CD8-positive, alpha-beta memory T cell (primary cell): ENCODE measurements at regions of chr17 and their contacts with region 1.

Region 1: GRCh38 chr17:63722403-63722802 is 19.2 kb downstream of the STRADA start:
- DNase-seq: no peak
- H3K4me3 ChIP-seq: no peak overlapping the region
- H3K4me3 Mint-ChIP-seq: no peak overlapping the region
- H3K27ac ChIP-seq: no peak overlapping the region
- H3K27ac Mint-ChIP-seq: peak overlapping the region in 1 of 8 donors; percentile 54
- H3K4me1 ChIP-seq: no peaks in the 10 kb centered on the region
- H3K4me1 Mint-ChIP-seq: peaks cover 0 to 3% (median 0%) of the 10 kb centered on the region in 3 donors
- H3K27me3 ChIP-seq: no peaks in the 10 kb centered on the region
- H3K27me3 Mint-ChIP-seq: no peaks in the 10 kb centered on the region

Region 2: GRCh38 chr17:63611354-63611753 is 111.0 kb before region 1 on chr17:
- CTCF ChIA-PET with region 1: no interaction called
- POLR2A ChIA-PET with region 1: no interaction called
- DNase-seq: no peak
- H3K4me3 ChIP-seq: no peak overlapping the region
- H3K4me3 Mint-ChIP-seq: peak overlapping the region in 5 of 7 donors; percentile 15 to 71 (median 54)
- H3K27ac ChIP-seq: no peak overlapping the region
- H3K27ac Mint-ChIP-seq: peak overlapping the region; percentile 45 to 93 (median 84)
- H3K4me1 ChIP-seq: peaks cover 30% of the 10 kb centered on the region
- H3K4me1 Mint-ChIP-seq: peaks cover 29 to 35% (median 34%) of the 10 kb centered on the region in 3 donors
- H3K27me3 ChIP-seq: no peaks in the 10 kb centered on the region
- H3K27me3 Mint-ChIP-seq: no peaks in the 10 kb centered on the region

Region 3: GRCh38 chr17:63688396-63689020 is 33.9 kb before region 1 on chr17:
- CTCF ChIA-PET with region 1: no interaction called
- POLR2A ChIA-PET with region 1: no interaction called
- DNase-seq: no peak
- H3K4me3 ChIP-seq: no peak overlapping the region
- H3K4me3 Mint-ChIP-seq: no peak overlapping the region
- H3K27ac ChIP-seq: no peak overlapping the region
- H3K27ac Mint-ChIP-seq: peak overlapping the region in 2 of 8 donors; percentile 47 to 59
- H3K4me1 ChIP-seq: no peaks in the 10 kb centered on the region
- H3K4me1 Mint-ChIP-seq: peaks cover 10 to 18% (median 12%) of the 10 kb centered on the region in 3 donors
- H3K27me3 ChIP-seq: no peaks in the 10 kb centered on the region
- H3K27me3 Mint-ChIP-seq: no peaks in the 10 kb centered on the region

Region 4: GRCh38 chr17:63707151-63707550 is 15.3 kb before region 1 on chr17:
- CTCF ChIA-PET with region 1: interaction called, 11 read pairs
- POLR2A ChIA-PET with region 1: interaction called, 5 read pairs
- DNase-seq: peak in 4 of 5 donors; percentile 21 to 67 (median 61)
- H3K4me3 ChIP-seq: peak overlapping the region; percentile 55
- H3K4me3 Mint-ChIP-seq: peak overlapping the region; percentile 79 to 88 (median 84)
- H3K27ac ChIP-seq: peak overlapping the region; percentile 62
- H3K27ac Mint-ChIP-seq: peak overlapping the region; percentile 80 to 99 (median 95)
- H3K4me1 ChIP-seq: peaks cover 86% of the 10 kb centered on the region
- H3K4me1 Mint-ChIP-seq: peaks cover 70 to 85% (median 74%) of the 10 kb centered on the region in 3 donors
- H3K27me3 ChIP-seq: no peaks in the 10 kb centered on the region
- H3K27me3 Mint-ChIP-seq: no peaks in the 10 kb centered on the region

Region 5: DNA sequence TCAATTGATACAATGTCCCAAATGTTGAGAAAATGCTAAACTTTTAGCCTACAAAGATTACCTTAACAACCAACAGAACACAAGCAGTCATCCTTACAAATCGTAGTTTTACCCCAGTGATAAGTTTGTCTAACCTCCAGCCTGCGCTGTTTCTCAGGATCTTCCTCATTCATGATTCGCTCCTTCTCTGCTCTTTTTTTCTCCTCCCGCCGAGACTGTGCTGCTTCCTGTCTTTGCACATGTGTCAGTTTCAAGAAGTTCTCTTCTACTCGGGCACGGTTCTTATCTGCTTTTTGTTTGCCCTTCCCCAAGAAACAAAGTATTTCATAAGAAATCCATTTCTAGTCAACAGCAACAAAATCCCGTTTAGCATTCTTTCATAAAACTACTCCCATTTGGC is 29.4 kb after region 1 on chr17:
- CTCF ChIA-PET with region 1: no interaction called
- POLR2A ChIA-PET with region 1: no interaction called
- DNase-seq: peak in 1 of 5 donors; percentile 46
- H3K4me3 ChIP-seq: no peak overlapping the region
- H3K4me3 Mint-ChIP-seq: peak overlapping the region in 6 of 7 donors; percentile 3 to 67 (median 36)
- H3K27ac ChIP-seq: no peak overlapping the region
- H3K27ac Mint-ChIP-seq: peak overlapping the region in 7 of 8 donors; percentile 1 to 82 (median 73)
- H3K4me1 ChIP-seq: peaks cover 9% of the 10 kb centered on the region
- H3K4me1 Mint-ChIP-seq: peaks cover 8 to 15% (median 10%) of the 10 kb centered on the region in 3 donors
- H3K27me3 ChIP-seq: no peaks in the 10 kb centered on the region
- H3K27me3 Mint-ChIP-seq: no peaks in the 10 kb centered on the region

Region 6: DNA sequence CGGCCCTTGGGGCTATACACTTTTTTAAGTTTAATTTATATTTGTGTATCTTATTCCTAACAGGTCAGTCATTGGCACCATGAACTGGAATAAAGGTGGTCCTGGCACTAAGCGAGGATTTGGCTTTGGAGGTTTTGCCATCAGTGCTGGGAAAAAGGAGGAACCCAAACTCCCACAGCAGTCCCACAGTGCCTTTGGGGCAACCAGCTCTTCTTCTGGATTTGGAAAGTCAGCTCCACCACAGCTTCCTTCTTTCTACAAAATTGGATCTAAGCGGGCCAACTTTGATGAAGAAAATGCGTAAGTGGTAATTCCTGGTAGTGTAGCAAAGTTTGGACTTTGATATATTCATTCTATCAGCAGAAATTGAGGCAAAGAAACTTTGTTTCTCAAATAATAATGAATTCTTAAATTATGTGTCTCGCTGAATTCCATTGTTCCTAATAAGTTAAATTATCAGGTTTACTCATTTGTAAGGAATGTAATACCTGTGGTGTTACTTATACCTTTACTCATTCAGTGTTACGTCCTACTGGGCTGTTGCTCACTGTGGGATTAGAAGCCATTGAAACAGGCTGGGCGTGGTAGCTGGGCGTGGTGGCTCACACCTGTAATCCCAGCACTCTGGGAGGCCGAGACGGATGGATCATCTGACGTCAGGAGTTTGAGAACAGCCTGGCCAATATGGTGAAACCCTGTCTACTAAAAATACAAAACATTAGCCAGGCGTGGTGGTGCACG is 64.7 kb after region 1 on chr17:
- CTCF ChIA-PET with region 1: no interaction called
- POLR2A ChIA-PET with region 1: no interaction called
- DNase-seq: no peak
- H3K4me3 ChIP-seq: no peak overlapping the region
- H3K4me3 Mint-ChIP-seq: no peak overlapping the region
- H3K27ac ChIP-seq: no peak overlapping the region
- H3K27ac Mint-ChIP-seq: peak overlapping the region in 1 of 8 donors; percentile 17
- H3K4me1 ChIP-seq: peaks cover 8% of the 10 kb centered on the region
- H3K4me1 Mint-ChIP-seq: peaks cover 22 to 35% (median 23%) of the 10 kb centered on the region in 3 donors
- H3K27me3 ChIP-seq: no peaks in the 10 kb centered on the region
- H3K27me3 Mint-ChIP-seq: no peaks in the 10 kb centered on the region

Region 7: GRCh38 chr17:63911657-63912426 is 189.4 kb after region 1 on chr17:
- CTCF ChIA-PET with region 1: no interaction called
- POLR2A ChIA-PET with region 1: interaction called, 10 read pairs
- DNase-seq: peak; percentile 51 to 75 (median 58)
- H3K4me3 ChIP-seq: no peak overlapping the region
- H3K4me3 Mint-ChIP-seq: no peak overlapping the region
- H3K27ac ChIP-seq: no peak overlapping the region
- H3K27ac Mint-ChIP-seq: peak overlapping the region in 2 of 8 donors; percentile 17 to 47
- H3K4me1 ChIP-seq: no peaks in the 10 kb centered on the region
- H3K4me1 Mint-ChIP-seq: peaks cover 0 to 2% (median 0%) of the 10 kb centered on the region in 3 donors
- H3K27me3 ChIP-seq: no peaks in the 10 kb centered on the region
- H3K27me3 Mint-ChIP-seq: peaks cover 0 to 1% of the 10 kb centered on the region in 2 donors